Panc1 (cell line): ENCODE measurements at regions of chr1 and their contacts with region 1.

Region 1: GRCh38 chr1:35597870-35598269 is 24.8 kb downstream of the TFAP2E start:
- DNase-seq: no peak
- ATAC-seq: no peak
- H3K4me3 ChIP-seq: no peak overlapping the region
- H3K27ac ChIP-seq: no peak overlapping the region
- H3K4me1 ChIP-seq: no peaks in the 10 kb centered on the region
- H3K27me3 ChIP-seq: no peaks in the 10 kb centered on the region
- CTCF ChIP-seq: no peak

Region 2: GRCh38 chr1:35622510-35623178 is 24.8 kb after region 1 on chr1:
- CTCF ChIA-PET with region 1: no interaction called
- POLR2A ChIA-PET with region 1: interaction called, 11 read pairs
- in situ Hi-C with region 1: no loop called
- intact Hi-C with region 1: no loop called
- DNase-seq: no peak
- ATAC-seq: no peak
- H3K4me3 ChIP-seq: no peak overlapping the region
- H3K27ac ChIP-seq: no peak overlapping the region
- H3K4me1 ChIP-seq: no peaks in the 10 kb centered on the region
- H3K27me3 ChIP-seq: no peaks in the 10 kb centered on the region
- CTCF ChIP-seq: no peak

Region 3: DNA sequence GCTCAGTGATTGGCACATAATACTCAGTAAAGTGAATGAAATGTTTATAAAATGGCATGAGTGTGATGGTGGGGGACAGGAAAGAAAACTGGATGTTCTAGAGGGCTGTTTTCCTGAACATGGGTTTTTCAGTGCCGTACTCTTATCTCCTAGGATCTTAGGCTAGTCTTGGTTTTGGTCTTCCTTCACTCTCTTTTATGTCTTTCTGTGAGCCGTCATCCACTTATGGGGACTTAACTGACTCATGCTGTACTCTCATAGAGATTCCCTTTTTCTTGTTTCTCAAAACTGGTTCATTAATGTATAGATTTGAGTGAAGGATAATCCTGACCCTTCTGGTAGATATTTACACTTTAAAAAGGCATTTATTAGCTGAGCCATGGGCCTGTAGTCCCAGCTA is 349.7 kb after region 1 on chr1:
- CTCF ChIA-PET with region 1: no interaction called
- POLR2A ChIA-PET with region 1: no interaction called
- in situ Hi-C with region 1: no loop called
- intact Hi-C with region 1: no loop called
- DNase-seq: no peak
- ATAC-seq: no peak
- H3K4me3 ChIP-seq: no peak overlapping the region
- H3K27ac ChIP-seq: no peak overlapping the region
- H3K4me1 ChIP-seq: no peaks in the 10 kb centered on the region
- H3K27me3 ChIP-seq: no peaks in the 10 kb centered on the region
- CTCF ChIP-seq: no peak